PC-9 (cell line): ENCODE measurements at regions of chr11 and their contacts with region 1.

Region 1: DNA sequence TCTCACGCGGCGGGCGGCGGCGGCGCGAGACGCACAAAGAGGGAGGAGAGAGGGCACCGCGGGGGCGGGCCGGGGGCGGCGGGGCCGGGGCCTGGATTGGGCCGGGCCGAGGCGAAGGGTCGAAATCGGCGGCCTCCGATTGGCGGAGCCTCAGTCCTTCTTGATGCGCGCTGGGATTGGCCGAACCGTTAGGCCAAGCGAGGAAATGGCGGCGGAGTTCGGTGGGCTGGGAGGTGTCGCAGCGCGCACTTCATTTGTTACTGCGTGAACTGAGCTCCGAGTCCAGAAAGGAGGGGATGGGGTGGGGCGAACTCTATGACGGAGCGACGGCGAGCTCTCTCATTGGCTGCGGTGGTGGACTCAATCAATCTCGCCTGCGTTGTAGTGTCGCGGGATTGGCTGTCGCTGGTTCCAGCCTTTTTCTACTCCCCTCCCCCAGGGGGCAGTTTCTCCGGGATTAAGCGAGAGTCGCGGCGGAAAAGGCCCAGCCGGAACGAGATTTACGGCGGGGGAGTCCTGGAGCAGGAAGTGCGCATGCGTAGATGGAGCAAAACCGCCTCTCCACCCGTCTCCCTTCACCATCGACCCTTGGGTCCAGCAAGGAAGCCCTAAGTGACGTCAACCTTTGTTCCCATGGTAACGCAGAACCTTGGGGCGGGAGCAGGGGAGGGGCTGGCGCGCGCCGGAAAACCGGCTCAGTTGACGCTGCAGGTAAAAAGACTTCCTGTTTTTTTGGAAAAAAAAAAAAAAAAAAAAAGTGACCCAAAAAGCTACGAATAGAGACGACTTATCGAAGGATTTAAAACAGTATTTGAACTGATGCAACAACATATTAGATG is at the start of gene SF1:
- DNase-seq: peak; percentile 100
- H3K4me3 ChIP-seq: peak within 1 kb of the TSS; percentile 98
- H3K27ac ChIP-seq: peak within 1 kb of the TSS; percentile 86
- H3K4me1 ChIP-seq: peaks cover 26% of the 10 kb centered on the region
- H3K27me3 ChIP-seq: no peaks in the 10 kb centered on the region
- CTCF ChIP-seq: 0 out of 2 replicates have a peak, but pooled peaks have one; percentile 2
- total RNA-seq, gene SF1: 253 and 336 TPM in 2 replicates

Region 2: DNA sequence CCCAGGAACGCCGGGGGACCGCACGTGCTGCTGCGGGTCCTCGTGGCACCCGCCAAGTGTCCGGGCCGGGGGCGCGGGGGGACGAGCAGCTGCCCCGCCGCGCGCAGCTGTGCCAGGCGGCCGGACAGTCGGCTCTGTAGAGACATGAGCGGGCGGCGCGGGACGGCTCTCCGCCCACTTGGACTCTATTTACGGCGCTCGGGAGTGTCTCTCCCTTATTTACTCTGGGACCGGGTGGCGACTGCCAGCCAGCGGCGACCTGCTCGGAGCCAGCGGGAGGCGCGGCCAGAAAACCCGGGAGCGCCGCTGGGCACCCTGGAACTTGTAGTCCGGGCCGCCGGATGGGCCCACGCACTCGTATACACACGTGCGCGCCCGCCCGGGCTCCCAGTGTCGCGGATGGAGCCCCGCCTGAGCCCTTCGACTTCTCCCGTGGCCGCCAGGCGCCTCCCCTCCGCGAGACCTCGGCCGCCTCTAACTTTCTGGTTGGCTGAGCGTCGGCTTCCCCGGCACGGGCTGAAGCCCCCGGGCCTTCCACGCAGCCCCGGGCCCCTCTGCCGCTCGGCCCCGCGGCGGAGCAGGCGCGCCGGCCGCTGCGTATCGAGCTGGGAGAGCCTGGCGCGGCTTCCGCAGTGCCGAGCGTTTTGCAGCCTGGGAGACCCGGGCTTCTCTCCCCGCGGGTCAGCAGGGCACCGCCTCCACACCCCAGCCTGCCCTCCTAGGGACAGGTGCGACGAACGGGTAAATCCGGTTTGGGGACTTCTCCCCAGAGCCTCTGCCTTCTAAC is 612.7 kb before region 1 on chr11 and contains the start of gene MACROD1:
- CTCF ChIA-PET with region 1: no interaction called
- POLR2A ChIA-PET with region 1: interaction called, 17 read pairs
- intact Hi-C with region 1: no loop called
- DNase-seq: peak; percentile 97 to 98
- H3K4me3 ChIP-seq: peak within 1 kb of the TSS; percentile 70
- H3K27ac ChIP-seq: peak within 1 kb of the TSS; percentile 74
- H3K4me1 ChIP-seq: peaks cover 22% of the 10 kb centered on the region
- H3K27me3 ChIP-seq: no peaks in the 10 kb centered on the region
- CTCF ChIP-seq: no peak
- total RNA-seq, gene MACROD1: 41.0 and 68.8 TPM in 2 replicates

Region 3: GRCh38 chr11:64694821-64695365 is 83.8 kb before region 1 on chr11:
- CTCF ChIA-PET with region 1: no interaction called
- POLR2A ChIA-PET with region 1: no interaction called
- intact Hi-C with region 1: no loop called
- DNase-seq: no peak
- H3K4me3 ChIP-seq: no peak overlapping the region
- H3K27ac ChIP-seq: no peak overlapping the region
- H3K4me1 ChIP-seq: no peaks in the 10 kb centered on the region
- H3K27me3 ChIP-seq: peaks cover 96% of the 10 kb centered on the region
- CTCF ChIP-seq: no peak

Region 4: GRCh38 chr11:64793271-64794172 is 14.8 kb after region 1 on chr11:
- CTCF ChIA-PET with region 1: no interaction called
- POLR2A ChIA-PET with region 1: no interaction called
- intact Hi-C with region 1: no loop called
- DNase-seq: no peak
- H3K4me3 ChIP-seq: no peak overlapping the region
- H3K27ac ChIP-seq: no peak overlapping the region
- H3K4me1 ChIP-seq: no peaks in the 10 kb centered on the region
- H3K27me3 ChIP-seq: no peaks in the 10 kb centered on the region
- CTCF ChIP-seq: no peak

Region 5: DNA sequence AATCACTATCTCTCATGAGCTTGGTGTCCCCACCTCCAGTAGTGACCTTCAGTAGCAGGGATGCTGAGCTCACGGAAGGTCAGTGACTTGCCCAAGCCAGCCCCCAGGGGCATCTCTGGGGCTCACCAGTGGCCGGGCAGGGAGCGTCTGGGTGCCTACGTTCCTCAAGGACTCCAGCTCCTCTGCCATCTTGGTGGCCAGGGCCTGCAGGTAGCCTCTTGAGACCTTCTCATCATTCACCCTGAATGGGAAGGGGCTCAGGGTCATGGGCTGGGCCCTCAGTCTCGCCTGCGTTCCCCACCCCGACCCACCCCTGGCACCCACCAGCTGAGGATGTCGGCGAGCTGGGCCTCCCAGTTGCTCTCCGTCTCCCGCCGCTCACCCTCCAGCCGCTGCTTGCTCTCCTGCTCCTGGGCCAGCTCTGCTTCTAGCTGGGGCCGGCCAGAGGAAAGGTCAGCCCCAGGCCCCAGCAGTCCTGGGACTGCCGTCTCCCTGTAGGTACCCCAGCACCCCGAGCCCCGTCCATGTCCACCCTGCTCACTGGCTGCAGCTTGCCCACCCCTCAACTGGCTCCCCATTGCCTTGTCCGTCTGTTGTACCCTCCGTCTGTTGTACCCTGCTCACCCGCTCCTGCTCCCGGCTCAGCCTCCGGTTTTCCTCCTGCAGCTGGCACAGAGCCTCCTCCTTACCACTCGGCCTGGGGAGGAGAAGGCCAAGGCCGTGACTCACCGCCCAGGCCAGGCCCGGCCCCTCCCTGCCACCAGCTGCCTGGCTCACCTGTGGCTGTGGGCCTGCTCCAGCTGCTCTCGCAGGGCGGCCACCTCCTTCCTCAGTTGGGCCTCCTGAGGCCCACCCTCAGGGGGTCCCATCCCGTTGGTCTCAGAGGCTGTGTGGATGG is 56.2 kb after region 1 on chr11:
- CTCF ChIA-PET with region 1: interaction called, 25 read pairs
- POLR2A ChIA-PET with region 1: interaction called, 19 read pairs
- intact Hi-C with region 1: no loop called
- DNase-seq: peak; percentile 83 to 95
- H3K4me3 ChIP-seq: no peak overlapping the region
- H3K27ac ChIP-seq: no peak overlapping the region
- H3K4me1 ChIP-seq: peaks cover 16% of the 10 kb centered on the region
- H3K27me3 ChIP-seq: no peaks in the 10 kb centered on the region
- CTCF ChIP-seq: no peak

Region 6: GRCh38 chr11:64894070-64894796 is 115.5 kb after region 1 on chr11:
- CTCF ChIA-PET with region 1: no interaction called
- POLR2A ChIA-PET with region 1: interaction called, 10 read pairs
- intact Hi-C with region 1: no loop called
- DNase-seq: peak; percentile 53 to 87
- H3K4me3 ChIP-seq: no peak overlapping the region
- H3K27ac ChIP-seq: no peak overlapping the region
- H3K4me1 ChIP-seq: peaks cover 1% of the 10 kb centered on the region; the same call in 1 of the 2 replicates
- H3K27me3 ChIP-seq: no peaks in the 10 kb centered on the region
- CTCF ChIP-seq: peak; percentile 96

Region 7: GRCh38 chr11:65117216-65118096 is 338.7 kb after region 1 on chr11 and contains the start of gene ZNHIT2:
- CTCF ChIA-PET with region 1: interaction called, 9 read pairs
- POLR2A ChIA-PET with region 1: interaction called, 4 read pairs
- intact Hi-C with region 1: loop called (anchors 5 kb)
- DNase-seq: peak; percentile 96 to 100
- H3K4me3 ChIP-seq: peak within 1 kb of the TSS; percentile 100
- H3K27ac ChIP-seq: peak within 1 kb of the TSS; percentile 86
- H3K4me1 ChIP-seq: peaks cover 38% of the 10 kb centered on the region
- H3K27me3 ChIP-seq: no peaks in the 10 kb centered on the region
- CTCF ChIP-seq: peak; percentile 98
- total RNA-seq, gene ZNHIT2: 13.7 and 22.3 TPM in 2 replicates

Region 8: GRCh38 chr11:65477149-65477965 is 698.6 kb after region 1 on chr11:
- CTCF ChIA-PET with region 1: no interaction called
- POLR2A ChIA-PET with region 1: interaction called, 15 read pairs
- intact Hi-C with region 1: no loop called
- DNase-seq: peak; percentile 87 to 98
- H3K4me3 ChIP-seq: peak overlapping the region; percentile 74
- H3K27ac ChIP-seq: peak overlapping the region; percentile 88
- H3K4me1 ChIP-seq: peaks cover 61% of the 10 kb centered on the region
- H3K27me3 ChIP-seq: no peaks in the 10 kb centered on the region
- CTCF ChIP-seq: no peak